ENCODE measurements at regions of chr18 and their contacts with region 1.

Region 1: GRCh38 chr18:10670856-10671255 is 145.0 kb downstream of the NAPG start:
- DNase-seq: no peak
- H3K4me3 ChIP-seq: no peak overlapping the region
- H3K27ac ChIP-seq: no peak overlapping the region
- H3K4me1 ChIP-seq: no peaks in the 10 kb centered on the region
- H3K27me3 ChIP-seq: no peaks in the 10 kb centered on the region
- CTCF ChIP-seq: no peak
- POLR2A ChIP-seq: no peak

Region 2: GRCh38 chr18:9419956-9420631 is 1250.8 kb before region 1 on chr18:
- intact Hi-C with region 1: loop called (anchors 5 kb)
- DNase-seq: no peak
- H3K4me3 ChIP-seq: no peak overlapping the region
- H3K27ac ChIP-seq: no peak overlapping the region
- H3K4me1 ChIP-seq: peaks cover 24% of the 10 kb centered on the region
- H3K27me3 ChIP-seq: no peaks in the 10 kb centered on the region
- CTCF ChIP-seq: no peak
- POLR2A ChIP-seq: no peak

Measured in vagina (tissue), 2 donors.